ENCODE measurements at regions of chr5 and their contacts with region 1.

Region 1: GRCh38 chr5:39461026-39461682 is 36.4 kb upstream of the DAB2 start:
- DNase-seq: peak in 2 of 9 experiments; percentile 35 to 54
- ATAC-seq: no peak
- H3K4me3 ChIP-seq: no peak overlapping the region
- H3K4me3 Mint-ChIP-seq: no peak overlapping the region
- H3K27ac ChIP-seq: peak overlapping the region in 1 of 2 experiments; percentile 34
- H3K27ac Mint-ChIP-seq: no peak overlapping the region
- H3K4me1 ChIP-seq: no peaks in the 10 kb centered on the region
- H3K4me1 Mint-ChIP-seq: peaks cover 3% of the 10 kb centered on the region
- H3K27me3 ChIP-seq: no peaks in the 10 kb centered on the region
- H3K27me3 Mint-ChIP-seq: peaks cover 36% of the 10 kb centered on the region
- CTCF ChIP-seq: no peak

Region 2: GRCh38 chr5:39520232-39520572 is 59.0 kb after region 1 on chr5:
- CTCF ChIA-PET with region 1: no interaction called
- POLR2A ChIA-PET with region 1: no interaction called
- intact Hi-C with region 1: loop called in 1 of 2 experiments (anchors 10 kb)
- DNase-seq: no peak
- ATAC-seq: no peak
- H3K4me3 ChIP-seq: no peak overlapping the region
- H3K4me3 Mint-ChIP-seq: no peak overlapping the region
- H3K27ac ChIP-seq: no peak overlapping the region
- H3K27ac Mint-ChIP-seq: no peak overlapping the region
- H3K4me1 ChIP-seq: no peaks in the 10 kb centered on the region
- H3K4me1 Mint-ChIP-seq: no peaks in the 10 kb centered on the region
- H3K27me3 ChIP-seq: no peaks in the 10 kb centered on the region
- H3K27me3 Mint-ChIP-seq: peaks cover 12% of the 10 kb centered on the region
- CTCF ChIP-seq: no peak